Right cardiac atrium (tissue), 5 donors: ENCODE measurements at regions of chr1 and their contacts with region 1.

Region 1: GRCh38 chr1:237358555-237358954 is 316.6 kb downstream of the RYR2 start:
- DNase-seq: no peak
- ATAC-seq: peak in 1 of 2 donors; percentile 46
- H3K4me3 ChIP-seq: no peak overlapping the region
- H3K27ac ChIP-seq: no peak overlapping the region
- H3K4me1 ChIP-seq: no peaks in the 10 kb centered on the region
- H3K27me3 ChIP-seq: no peaks in the 10 kb centered on the region

Region 2: GRCh38 chr1:237062976-237063375 is 295.6 kb before region 1 on chr1:
- intact Hi-C with region 1: no loop called
- DNase-seq: no peak
- ATAC-seq: no peak
- H3K4me3 ChIP-seq: no peak overlapping the region
- H3K27ac ChIP-seq: no peak overlapping the region
- H3K4me1 ChIP-seq: peaks cover 1% of the 10 kb centered on the region
- H3K27me3 ChIP-seq: no peaks in the 10 kb centered on the region

Region 3: DNA sequence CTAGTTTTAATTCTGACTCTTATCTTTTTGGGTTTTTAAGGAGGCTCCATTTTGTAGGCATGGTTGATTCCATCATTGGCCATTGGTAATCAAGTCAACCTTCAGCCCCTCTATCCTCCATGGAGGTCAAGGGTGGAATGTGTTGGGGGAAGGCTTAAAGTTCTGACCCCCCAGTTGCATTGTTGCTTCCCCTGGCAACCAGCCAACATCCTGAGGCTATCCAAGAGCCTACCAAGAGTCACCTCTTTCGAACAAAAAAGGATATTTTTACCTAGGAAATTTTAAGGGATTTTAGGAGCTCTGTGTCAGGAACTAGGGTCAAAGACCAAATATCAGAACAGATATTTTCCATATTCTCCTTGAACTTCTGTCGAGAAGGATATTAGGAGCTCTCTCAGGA is 64.8 kb before region 1 on chr1:
- intact Hi-C with region 1: loop called in 1 of 4 experiments (anchors 10 kb)
- DNase-seq: no peak
- ATAC-seq: no peak
- H3K4me3 ChIP-seq: no peak overlapping the region
- H3K27ac ChIP-seq: no peak overlapping the region
- H3K4me1 ChIP-seq: no peaks in the 10 kb centered on the region
- H3K27me3 ChIP-seq: no peaks in the 10 kb centered on the region

Region 4: GRCh38 chr1:237440346-237440745 is 81.8 kb after region 1 on chr1:
- intact Hi-C with region 1: no loop called
- DNase-seq: no peak
- ATAC-seq: no peak
- H3K4me3 ChIP-seq: no peak overlapping the region
- H3K27ac ChIP-seq: no peak overlapping the region
- H3K4me1 ChIP-seq: peaks cover 1% of the 10 kb centered on the region
- H3K27me3 ChIP-seq: no peaks in the 10 kb centered on the region

Region 5: DNA sequence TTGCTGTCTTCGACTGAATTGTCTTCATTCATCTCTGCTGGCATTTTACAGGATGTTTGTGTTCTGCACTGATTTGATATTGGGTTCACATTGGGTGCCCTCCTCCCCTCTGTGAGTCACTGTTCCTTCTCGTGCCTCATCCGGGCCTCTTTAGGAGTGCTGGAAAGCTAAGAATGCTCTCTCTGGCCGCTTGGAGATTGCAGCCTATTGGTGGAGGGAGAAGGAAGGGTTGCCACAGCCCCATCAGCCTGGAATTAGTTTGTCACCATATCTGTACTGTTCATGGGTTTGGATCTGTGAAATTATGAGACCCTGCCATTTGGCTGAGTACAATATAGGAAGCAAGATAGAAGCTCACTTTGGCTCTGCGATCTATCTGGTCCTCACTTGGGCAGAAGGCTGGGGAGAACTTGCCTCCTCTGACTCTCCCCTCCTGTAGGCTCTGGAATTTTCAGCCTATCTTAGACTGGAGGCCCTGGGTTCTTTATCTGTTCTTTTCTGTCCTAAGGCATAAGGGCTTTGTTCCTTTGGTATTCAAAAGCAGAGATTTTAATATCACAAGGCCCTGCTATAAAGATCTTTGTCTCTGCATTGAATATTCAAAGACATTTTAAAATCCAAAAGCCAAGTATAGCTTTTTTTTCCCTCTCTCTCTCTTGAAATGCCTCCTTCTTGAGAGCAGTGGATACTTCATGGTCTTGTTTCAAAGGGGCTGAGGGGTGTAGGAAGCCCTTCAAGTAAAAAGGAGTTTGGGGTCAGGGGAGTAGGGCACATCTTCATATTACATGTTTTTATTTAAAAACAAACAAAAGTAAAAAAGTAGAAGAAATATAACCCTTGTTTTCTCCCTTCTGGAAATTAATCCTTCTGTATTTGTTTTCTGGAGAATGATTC is 184.2 kb after region 1 on chr1:
- intact Hi-C with region 1: no loop called
- DNase-seq: no peak
- ATAC-seq: peak; percentile 59 to 70
- H3K4me3 ChIP-seq: no peak overlapping the region
- H3K27ac ChIP-seq: no peak overlapping the region
- H3K4me1 ChIP-seq: no peaks in the 10 kb centered on the region
- H3K27me3 ChIP-seq: no peaks in the 10 kb centered on the region

Region 6: GRCh38 chr1:238052496-238053266 is 694.1 kb after region 1 on chr1:
- intact Hi-C with region 1: no loop called
- DNase-seq: no peak
- ATAC-seq: no peak
- H3K4me3 ChIP-seq: no peak overlapping the region
- H3K27ac ChIP-seq: no peak overlapping the region
- H3K4me1 ChIP-seq: no peaks in the 10 kb centered on the region
- H3K27me3 ChIP-seq: no peaks in the 10 kb centered on the region